GM13976 (cell line): ENCODE measurements at regions of chr17 and their contacts with region 1.

Region 1: GRCh38 chr17:66715745-66716156 is 119.2 kb upstream of the CACNG5 start:
- DNase-seq: peak; percentile 72
- CTCF ChIP-seq: peak; percentile 63

Region 2: DNA sequence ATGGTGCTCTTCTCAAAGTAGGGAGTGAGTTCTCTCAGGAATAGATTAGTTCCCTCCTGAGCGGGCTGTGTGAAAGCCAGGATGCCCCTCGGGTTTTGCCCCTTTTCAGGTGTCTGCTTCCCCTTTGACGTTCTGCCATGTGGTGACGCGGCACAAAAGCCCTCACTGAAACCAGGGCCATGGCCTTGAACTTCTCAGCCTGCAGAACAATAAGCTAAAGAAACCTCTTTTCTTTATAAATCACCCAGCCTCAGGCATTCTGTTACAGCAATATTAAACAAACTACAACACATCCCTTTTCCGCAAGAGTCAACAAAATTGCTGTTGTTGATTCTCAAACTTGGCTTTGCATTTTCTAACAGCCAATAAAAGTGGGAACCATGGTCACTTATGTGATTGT is 103.7 kb after region 1 on chr17:
- in situ Hi-C with region 1: no loop called
- DNase-seq: no peak
- CTCF ChIP-seq: no peak

Region 3: GRCh38 chr17:66906321-66907278 is 190.8 kb after region 1 on chr17:
- in situ Hi-C with region 1: loop called (anchors 10 kb)
- DNase-seq: peak; percentile 79
- CTCF ChIP-seq: peak; percentile 81